Activated CD8-positive, alpha-beta memory T cell treated with anti-CD3 and anti-CD28 coated beads, Interleukin-2, amount 10 ng/mL, durations not matched to agents 7 days and 5 days (primary cell): ENCODE measurements at regions of chr7 and their contacts with region 1.

Region 1: GRCh38 chr7:104956753-104957450 is 57.1 kb upstream of the KMT2E start:
- DNase-seq: peak; percentile 83
- ATAC-seq: peak; percentile 88
- H3K4me3 Mint-ChIP-seq: peak overlapping the region; percentile 43
- H3K27ac Mint-ChIP-seq: peak overlapping the region; percentile 98
- H3K4me1 Mint-ChIP-seq: peaks cover 66% of the 10 kb centered on the region
- H3K27me3 Mint-ChIP-seq: no peaks in the 10 kb centered on the region

Region 2: DNA sequence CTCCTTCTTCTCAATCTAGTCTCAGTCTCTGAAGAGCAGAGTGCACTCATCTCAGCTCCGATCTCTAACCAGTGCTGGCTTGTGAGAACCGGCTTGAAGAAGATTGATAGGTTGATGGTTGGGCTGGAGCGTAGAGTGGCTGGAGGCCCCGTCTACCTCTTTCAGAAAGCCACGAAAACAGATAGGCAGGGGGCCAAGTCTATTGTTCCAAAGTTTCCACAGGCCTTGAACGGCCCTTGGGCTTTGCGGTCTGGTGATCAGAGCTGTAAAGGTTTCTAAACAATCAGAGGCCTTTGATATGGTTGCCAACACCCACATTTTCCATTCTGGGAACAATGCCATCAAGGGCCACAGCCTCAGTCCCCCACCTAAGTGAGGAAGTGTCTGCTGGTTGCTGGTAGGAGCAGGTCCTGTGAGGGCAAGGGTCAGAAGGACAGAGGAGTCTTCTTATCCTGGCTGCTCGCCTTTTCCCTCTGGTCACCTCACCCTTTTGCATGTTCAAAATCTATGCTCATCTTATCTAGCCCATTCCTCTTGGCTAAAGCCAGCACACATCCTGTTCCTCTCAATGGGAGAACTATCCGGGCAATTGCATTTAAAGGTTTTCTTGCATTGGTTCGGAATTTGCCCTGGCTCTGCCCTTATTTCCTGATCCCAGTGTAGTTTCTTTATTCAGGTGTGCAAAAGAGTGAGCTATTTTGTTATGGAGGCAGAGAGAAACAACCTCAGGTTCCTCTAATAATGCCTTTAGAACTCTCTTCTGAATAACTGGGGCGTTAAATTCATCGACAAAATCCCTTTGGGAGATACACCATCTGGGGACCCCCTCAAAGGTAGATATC is 13.2 kb before region 1 on chr7:
- CTCF ChIA-PET with region 1: interaction called, 15 read pairs
- DNase-seq: peak; percentile 90
- ATAC-seq: peak; percentile 46
- H3K4me3 Mint-ChIP-seq: peak overlapping the region; percentile 90
- H3K27ac Mint-ChIP-seq: peak overlapping the region; percentile 100
- H3K4me1 Mint-ChIP-seq: peaks cover 68% of the 10 kb centered on the region
- H3K27me3 Mint-ChIP-seq: no peaks in the 10 kb centered on the region

Region 3: DNA sequence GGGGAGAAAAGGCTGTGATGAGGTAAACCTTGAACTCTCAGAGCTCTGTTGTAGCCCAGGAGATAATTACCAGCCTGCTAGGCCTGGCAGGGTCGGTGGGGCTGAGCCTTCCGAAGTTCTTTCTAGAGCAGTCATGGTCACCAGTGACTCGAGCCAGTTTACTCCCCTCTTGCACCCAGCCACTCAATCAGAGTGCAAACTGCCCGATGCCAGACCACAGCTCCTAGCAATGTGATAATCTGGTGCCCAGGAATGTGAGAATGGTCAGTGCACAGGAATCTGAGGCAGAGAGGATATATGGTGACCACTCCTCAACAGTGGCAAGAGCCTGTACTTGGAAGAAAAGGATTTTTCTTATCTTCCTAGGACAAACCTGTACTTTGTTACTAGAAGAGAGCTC is 10.7 kb after region 1 on chr7:
- CTCF ChIA-PET with region 1: interaction called, 10 read pairs
- DNase-seq: no peak
- ATAC-seq: no peak
- H3K4me3 Mint-ChIP-seq: no peak overlapping the region
- H3K27ac Mint-ChIP-seq: no peak overlapping the region
- H3K4me1 Mint-ChIP-seq: peaks cover 14% of the 10 kb centered on the region
- H3K27me3 Mint-ChIP-seq: no peaks in the 10 kb centered on the region

Region 4: DNA sequence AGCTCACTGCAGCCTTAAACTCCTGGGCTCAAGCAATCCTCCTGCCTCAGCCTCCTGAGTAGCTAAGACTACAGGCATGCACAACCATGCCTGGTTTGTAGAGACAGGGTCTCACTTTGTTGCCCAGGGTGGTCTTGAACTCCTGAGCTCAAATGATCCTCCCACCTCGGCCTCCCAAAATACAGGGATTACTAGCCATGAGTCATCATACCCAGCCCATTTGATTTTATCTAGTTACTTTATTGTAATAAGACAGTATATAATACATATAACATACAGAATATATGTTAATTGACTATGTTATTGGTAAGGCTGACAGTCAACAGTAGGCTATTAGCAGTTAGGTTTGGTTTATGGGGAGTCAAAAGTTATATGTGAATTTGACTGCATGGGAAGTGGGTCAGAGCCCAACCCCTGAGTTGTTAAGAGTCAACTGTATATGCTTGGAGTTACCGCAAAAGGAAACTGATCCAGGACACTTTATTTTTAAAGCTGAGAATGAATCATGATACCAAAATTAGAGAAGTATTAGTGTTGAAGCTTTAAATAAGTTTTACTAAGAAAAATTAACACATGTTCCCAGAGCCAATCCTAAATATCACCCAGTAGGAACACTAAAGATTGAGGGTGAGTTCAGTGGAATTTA is 36.4 kb after region 1 on chr7:
- CTCF ChIA-PET with region 1: no interaction called
- DNase-seq: no peak
- ATAC-seq: no peak
- H3K4me3 Mint-ChIP-seq: no peak overlapping the region
- H3K27ac Mint-ChIP-seq: no peak overlapping the region
- H3K4me1 Mint-ChIP-seq: peaks cover 41% of the 10 kb centered on the region
- H3K27me3 Mint-ChIP-seq: no peaks in the 10 kb centered on the region